Activated B cell treated with CpG ODN at 0.5 μM for 24 hours (primary cell): ENCODE measurements at regions of chr1 and their contacts with region 1.

Region 1: DNA sequence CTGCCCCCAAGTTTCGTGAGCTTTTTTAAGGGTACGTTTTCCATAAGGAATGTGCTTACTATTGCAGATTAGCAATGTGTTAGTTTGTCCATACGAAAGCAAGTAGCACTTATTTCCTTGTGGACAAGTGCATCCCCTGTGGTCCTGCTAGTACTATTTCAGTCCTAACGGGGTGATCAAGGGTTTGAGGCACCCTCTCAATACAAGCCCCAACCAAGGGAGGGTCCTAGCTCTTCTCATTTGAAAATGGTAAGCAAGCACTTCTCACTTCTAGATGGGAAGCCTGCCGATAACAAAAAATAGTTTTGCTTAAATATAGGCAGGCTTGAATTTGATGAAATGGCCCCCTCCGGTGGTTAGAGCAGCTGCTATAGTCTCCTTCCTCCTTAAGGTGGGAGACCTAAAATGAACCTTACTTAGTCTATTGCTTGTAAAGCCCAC is 64.0 kb upstream of the HMCN1 start:
- DNase-seq: no peak
- ATAC-seq: peak; percentile 81
- H3K4me3 Mint-ChIP-seq: no peak overlapping the region
- H3K27ac Mint-ChIP-seq: peak overlapping the region; percentile 43
- H3K4me1 Mint-ChIP-seq: peaks cover 33% of the 10 kb centered on the region
- H3K27me3 Mint-ChIP-seq: no peaks in the 10 kb centered on the region
- CTCF ChIP-seq: no peak

Region 2: DNA sequence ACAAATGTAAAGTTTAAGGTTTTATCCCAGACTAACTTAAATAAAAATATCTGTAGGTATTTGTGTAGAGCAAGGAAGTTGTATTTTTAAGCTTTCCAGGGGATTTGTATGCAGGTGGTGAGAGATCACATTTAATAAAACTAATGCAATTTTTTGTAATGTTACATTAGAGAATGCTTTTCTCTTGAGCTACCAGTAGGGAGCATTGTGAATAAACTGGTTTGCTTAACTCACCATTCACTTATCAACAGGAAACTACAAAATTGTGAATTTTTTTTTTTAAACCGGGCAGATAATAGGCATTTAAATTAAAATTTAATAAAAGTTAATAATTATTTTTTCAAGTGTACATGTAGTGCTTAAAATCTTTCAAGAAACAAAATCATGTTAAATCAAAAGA is 431.8 kb before region 1 on chr1:
- CTCF ChIA-PET with region 1: interaction called, 23 read pairs
- POLR2A ChIA-PET with region 1: no interaction called
- intact Hi-C with region 1: loop called (anchors 1 kb)
- DNase-seq: no peak
- ATAC-seq: no peak
- H3K4me3 Mint-ChIP-seq: no peak overlapping the region
- H3K27ac Mint-ChIP-seq: no peak overlapping the region
- H3K4me1 Mint-ChIP-seq: no peaks in the 10 kb centered on the region
- H3K27me3 Mint-ChIP-seq: no peaks in the 10 kb centered on the region
- CTCF ChIP-seq: no peak

Region 3: DNA sequence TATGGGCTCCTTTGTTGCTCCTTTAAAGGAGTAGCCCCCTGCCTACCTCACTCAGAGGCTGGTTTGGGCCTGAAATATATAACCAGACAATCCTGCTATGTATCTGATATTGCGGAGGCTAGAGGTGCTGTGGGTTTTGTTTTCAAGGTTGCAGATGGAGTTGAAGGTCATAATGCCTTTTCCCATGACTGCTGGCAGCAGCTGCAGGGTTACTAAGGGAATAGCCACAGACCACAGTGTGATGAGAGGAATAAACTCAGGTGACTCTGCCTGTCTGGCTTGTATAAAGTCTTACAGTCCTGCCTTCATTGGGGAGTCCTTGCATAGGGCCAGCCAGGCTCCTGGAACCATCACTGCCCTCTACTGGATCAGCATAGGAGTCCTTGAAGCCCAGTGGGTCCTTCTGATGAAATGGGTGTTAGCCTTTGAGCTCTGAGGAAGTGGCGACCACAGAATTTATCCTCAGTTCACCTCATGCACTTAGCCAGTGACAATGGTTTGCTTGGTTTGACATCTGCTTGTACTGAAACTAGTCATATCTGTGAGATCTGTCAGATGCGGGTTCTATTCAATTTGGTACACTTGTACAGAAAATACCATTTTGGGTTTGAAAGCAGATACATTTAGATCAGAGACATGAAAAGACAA is 110.4 kb before region 1 on chr1:
- CTCF ChIA-PET with region 1: interaction called, 23 read pairs
- POLR2A ChIA-PET with region 1: interaction called, 4 read pairs
- intact Hi-C with region 1: loop called (anchors 1 kb)
- DNase-seq: no peak
- ATAC-seq: peak; percentile 90
- H3K4me3 Mint-ChIP-seq: no peak overlapping the region
- H3K27ac Mint-ChIP-seq: peak overlapping the region; percentile 74
- H3K4me1 Mint-ChIP-seq: peaks cover 27% of the 10 kb centered on the region
- H3K27me3 Mint-ChIP-seq: no peaks in the 10 kb centered on the region
- CTCF ChIP-seq: no peak

Region 4: DNA sequence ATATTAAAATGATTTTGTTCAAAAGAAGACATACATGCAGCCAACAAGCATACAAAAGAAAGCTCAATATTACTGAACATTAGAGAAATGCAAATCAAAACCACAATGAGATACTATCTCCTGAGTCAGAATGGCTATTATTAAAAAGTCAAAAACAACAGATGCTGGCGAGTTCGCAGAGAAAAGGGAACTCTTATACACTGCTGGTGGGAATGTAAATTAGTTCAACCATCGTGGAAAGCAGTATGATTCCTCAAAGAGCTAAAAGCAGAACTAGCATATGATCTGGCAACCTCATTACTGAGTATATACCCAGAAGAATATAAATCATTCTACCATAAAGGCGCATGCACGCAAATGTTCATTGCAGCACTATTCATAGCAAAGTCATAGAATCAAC is 62.0 kb before region 1 on chr1:
- CTCF ChIA-PET with region 1: interaction called, 11 read pairs
- POLR2A ChIA-PET with region 1: interaction called, 9 read pairs
- intact Hi-C with region 1: loop called (anchors 2 kb)
- DNase-seq: no peak
- ATAC-seq: peak; percentile 83
- H3K4me3 Mint-ChIP-seq: no peak overlapping the region
- H3K27ac Mint-ChIP-seq: peak overlapping the region; percentile 26
- H3K4me1 Mint-ChIP-seq: peaks cover 63% of the 10 kb centered on the region
- H3K27me3 Mint-ChIP-seq: no peaks in the 10 kb centered on the region
- CTCF ChIP-seq: no peak

Region 5: DNA sequence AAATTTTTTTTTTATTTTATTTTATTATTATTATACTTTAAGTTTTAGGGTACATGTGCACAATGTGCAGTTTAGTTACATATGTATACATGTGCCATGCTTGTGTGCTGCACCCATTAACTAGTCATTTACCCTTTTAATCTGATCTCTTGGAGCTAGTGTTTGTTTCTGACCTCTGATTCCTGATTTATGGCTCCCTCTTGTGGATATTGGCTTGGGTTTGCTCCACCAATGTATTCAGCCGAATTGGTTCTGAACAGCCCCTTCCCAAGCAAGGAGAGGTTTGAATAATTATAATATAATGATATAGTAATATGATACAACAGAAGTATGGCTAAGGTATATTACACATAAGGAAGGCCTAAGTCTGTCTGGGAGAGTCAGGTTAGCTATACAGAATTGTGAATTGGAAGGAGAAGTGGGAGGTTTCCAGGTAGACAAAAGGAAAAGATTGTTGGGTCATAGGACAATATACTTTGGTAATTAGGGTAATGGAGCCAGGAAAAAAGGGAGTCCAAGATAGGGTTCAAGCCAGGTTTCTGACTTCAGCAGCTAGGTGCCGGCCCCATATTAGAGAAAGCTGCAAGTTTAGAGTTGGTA is 10.9 kb after region 1 on chr1:
- CTCF ChIA-PET with region 1: interaction called, 40 read pairs
- POLR2A ChIA-PET with region 1: no interaction called
- intact Hi-C with region 1: no loop called
- DNase-seq: no peak
- ATAC-seq: peak; percentile 67
- H3K4me3 Mint-ChIP-seq: no peak overlapping the region
- H3K27ac Mint-ChIP-seq: no peak overlapping the region
- H3K4me1 Mint-ChIP-seq: peaks cover 19% of the 10 kb centered on the region
- H3K27me3 Mint-ChIP-seq: no peaks in the 10 kb centered on the region
- CTCF ChIP-seq: peak; percentile 50

Region 6: GRCh38 chr1:185804206-185804605 is 134.0 kb after region 1 on chr1:
- CTCF ChIA-PET with region 1: no interaction called
- POLR2A ChIA-PET with region 1: no interaction called
- intact Hi-C with region 1: no loop called
- DNase-seq: no peak
- ATAC-seq: no peak
- H3K4me3 Mint-ChIP-seq: no peak overlapping the region
- H3K27ac Mint-ChIP-seq: no peak overlapping the region
- H3K4me1 Mint-ChIP-seq: no peaks in the 10 kb centered on the region
- H3K27me3 Mint-ChIP-seq: peaks cover 5% of the 10 kb centered on the region
- CTCF ChIP-seq: no peak

Region 7: DNA sequence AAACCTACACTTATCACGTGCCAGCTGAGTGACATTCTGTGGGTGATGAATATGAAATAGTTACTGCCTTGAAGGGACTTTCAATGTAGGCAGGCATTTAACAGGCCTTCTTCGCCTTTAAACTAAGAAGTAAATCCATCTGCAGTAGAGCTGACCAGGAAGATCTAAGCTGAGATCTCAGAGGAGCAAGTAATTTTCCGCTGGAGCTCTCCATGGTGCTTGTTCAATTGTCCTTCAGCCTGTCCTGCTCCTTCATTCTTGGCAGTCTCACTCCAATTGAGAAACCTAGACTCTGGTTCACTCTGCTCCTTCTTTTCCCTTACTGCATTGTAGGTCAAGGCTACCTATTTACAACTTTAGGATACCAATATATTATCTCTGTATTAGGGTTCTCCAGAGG is 247.4 kb after region 1 on chr1:
- CTCF ChIA-PET with region 1: no interaction called
- POLR2A ChIA-PET with region 1: no interaction called
- intact Hi-C with region 1: no loop called
- DNase-seq: no peak
- ATAC-seq: no peak
- H3K4me3 Mint-ChIP-seq: no peak overlapping the region
- H3K27ac Mint-ChIP-seq: no peak overlapping the region
- H3K4me1 Mint-ChIP-seq: no peaks in the 10 kb centered on the region
- H3K27me3 Mint-ChIP-seq: no peaks in the 10 kb centered on the region
- CTCF ChIP-seq: no peak